K562 (cell line): ENCODE measurements at regions of chr15 and their contacts with region 1.

Region 1: GRCh38 chr15:65792130-65792987 is at the start of gene DENND4A:
- DNase-seq: peak; percentile 87 to 99 (median 93)
- ATAC-seq: peak; percentile 87
- H3K4me3 ChIP-seq: peak within 1 kb of the TSS; percentile 77
- H3K27ac ChIP-seq: peak within 1 kb of the TSS; percentile 99
- H3K4me1 ChIP-seq: peaks cover 21 to 30% of the 10 kb centered on the region in 2 experiments
- H3K27me3 ChIP-seq: no peaks in the 10 kb centered on the region
- CTCF ChIP-seq: no peak
- EP300 ChIP-seq: no peak
- POLR2A ChIP-seq: peak; percentile 91
- RAD21 ChIP-seq: peak; percentile 6 to 13; a peak in 1 of 4 replicates
- polyA plus RNA-seq, gene DENND4A: 6.8 to 6.9 TPM

Region 2: GRCh38 chr15:65738649-65739048 is 53.7 kb before region 1 on chr15:
- CTCF ChIA-PET with region 1: no interaction called
- POLR2A ChIA-PET with region 1: no interaction called
- in situ Hi-C with region 1: no loop called
- intact Hi-C with region 1: no loop called
- DNase-seq: no peak
- ATAC-seq: no peak
- H3K4me3 ChIP-seq: no peak overlapping the region
- H3K27ac ChIP-seq: no peak overlapping the region
- H3K4me1 ChIP-seq: peaks cover 4 to 8% of the 10 kb centered on the region in 2 experiments; a peak in 4 of 5 replicates
- H3K27me3 ChIP-seq: no peaks in the 10 kb centered on the region
- CTCF ChIP-seq: no peak
- EP300 ChIP-seq: no peak
- POLR2A ChIP-seq: no peak
- RAD21 ChIP-seq: no peak

Region 3: GRCh38 chr15:65773386-65774111 is 18.8 kb before region 1 on chr15:
- CTCF ChIA-PET with region 1: interaction called, 3 read pairs
- POLR2A ChIA-PET with region 1: interaction called, 33 read pairs
- in situ Hi-C with region 1: no loop called
- intact Hi-C with region 1: no loop called
- DNase-seq: no peak
- ATAC-seq: no peak
- H3K4me3 ChIP-seq: no peak overlapping the region
- H3K27ac ChIP-seq: no peak overlapping the region
- H3K4me1 ChIP-seq: peaks cover 10 to 12% of the 10 kb centered on the region in 2 experiments; a peak in 4 of 5 replicates
- H3K27me3 ChIP-seq: no peaks in the 10 kb centered on the region
- CTCF ChIP-seq: no peak
- EP300 ChIP-seq: no peak
- POLR2A ChIP-seq: no peak
- RAD21 ChIP-seq: no peak

Region 4: GRCh38 chr15:65782096-65782495 is 10.3 kb before region 1 on chr15:
- CTCF ChIA-PET with region 1: interaction called, 3 read pairs
- POLR2A ChIA-PET with region 1: interaction called, 33 read pairs
- in situ Hi-C with region 1: no loop called
- intact Hi-C with region 1: no loop called
- DNase-seq: no peak
- ATAC-seq: peak; percentile 46
- H3K4me3 ChIP-seq: no peak overlapping the region
- H3K27ac ChIP-seq: no peak overlapping the region; the same call in 1 of the 3 replicates
- H3K4me1 ChIP-seq: peaks cover 13 to 38% of the 10 kb centered on the region in 2 experiments; a peak in 4 of 5 replicates
- H3K27me3 ChIP-seq: no peaks in the 10 kb centered on the region
- CTCF ChIP-seq: no peak
- EP300 ChIP-seq: no peak
- POLR2A ChIP-seq: no peak
- RAD21 ChIP-seq: no peak

Region 5: DNA sequence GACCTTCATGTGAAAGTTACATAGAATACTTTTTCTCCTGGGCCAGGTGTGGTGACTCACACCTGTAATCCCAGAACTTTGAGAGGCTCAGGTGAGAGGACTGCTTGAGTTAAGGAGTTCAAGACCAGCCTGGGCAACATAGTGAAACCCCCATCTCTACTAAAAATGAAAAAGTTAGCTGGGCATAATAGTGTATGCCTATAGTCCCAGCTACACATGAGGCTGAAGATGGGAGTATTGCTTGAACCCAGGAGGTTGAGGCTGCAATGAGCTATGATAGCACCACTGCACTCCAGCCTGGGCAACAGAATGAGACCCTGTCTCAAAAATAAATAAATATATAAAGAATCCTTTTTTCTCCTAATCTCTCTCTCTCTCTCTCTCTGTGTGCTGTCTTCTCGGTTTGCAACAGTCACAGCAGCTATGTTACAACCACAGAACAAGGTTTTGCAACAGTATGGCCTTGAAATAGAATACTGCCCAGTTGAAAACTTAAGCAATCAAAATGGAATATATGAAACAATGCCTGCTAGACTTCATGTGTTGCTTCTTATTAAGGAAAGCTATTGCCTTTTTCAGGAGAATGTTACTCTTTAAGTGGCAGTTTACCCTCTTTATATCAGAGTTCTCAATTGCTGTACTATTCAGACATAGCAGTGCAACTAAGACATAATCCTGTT is 12.0 kb after region 1 on chr15:
- CTCF ChIA-PET with region 1: no interaction called
- POLR2A ChIA-PET with region 1: interaction called, 19 read pairs
- in situ Hi-C with region 1: no loop called
- intact Hi-C with region 1: no loop called
- DNase-seq: no peak
- ATAC-seq: peak; percentile 26
- H3K4me3 ChIP-seq: no peak overlapping the region
- H3K27ac ChIP-seq: peak overlapping the region; percentile 58
- H3K4me1 ChIP-seq: peaks cover 6 to 36% of the 10 kb centered on the region in 2 experiments; a peak in 3 of 5 replicates
- H3K27me3 ChIP-seq: no peaks in the 10 kb centered on the region
- CTCF ChIP-seq: no peak
- EP300 ChIP-seq: no peak
- POLR2A ChIP-seq: no peak
- RAD21 ChIP-seq: no peak

Region 6: GRCh38 chr15:65824031-65824743 is 31.8 kb after region 1 on chr15:
- CTCF ChIA-PET with region 1: no interaction called
- POLR2A ChIA-PET with region 1: interaction called, 7 read pairs
- in situ Hi-C with region 1: no loop called
- intact Hi-C with region 1: loop called (anchors 2 kb)
- DNase-seq: peak; percentile 52 to 88 (median 66)
- ATAC-seq: peak; percentile 95
- H3K4me3 ChIP-seq: no peak overlapping the region
- H3K27ac ChIP-seq: peak overlapping the region; percentile 27; the same call in 1 of the 3 replicates
- H3K4me1 ChIP-seq: peaks cover 17 to 33% of the 10 kb centered on the region in 2 experiments
- H3K27me3 ChIP-seq: no peaks in the 10 kb centered on the region
- CTCF ChIP-seq: peak; percentile 73 to 85 (median 83)
- EP300 ChIP-seq: 0 out of 2 replicates have a peak, but pooled peaks have one; percentile 34
- POLR2A ChIP-seq: no peak
- RAD21 ChIP-seq: peak; percentile 69 to 82

Region 7: DNA sequence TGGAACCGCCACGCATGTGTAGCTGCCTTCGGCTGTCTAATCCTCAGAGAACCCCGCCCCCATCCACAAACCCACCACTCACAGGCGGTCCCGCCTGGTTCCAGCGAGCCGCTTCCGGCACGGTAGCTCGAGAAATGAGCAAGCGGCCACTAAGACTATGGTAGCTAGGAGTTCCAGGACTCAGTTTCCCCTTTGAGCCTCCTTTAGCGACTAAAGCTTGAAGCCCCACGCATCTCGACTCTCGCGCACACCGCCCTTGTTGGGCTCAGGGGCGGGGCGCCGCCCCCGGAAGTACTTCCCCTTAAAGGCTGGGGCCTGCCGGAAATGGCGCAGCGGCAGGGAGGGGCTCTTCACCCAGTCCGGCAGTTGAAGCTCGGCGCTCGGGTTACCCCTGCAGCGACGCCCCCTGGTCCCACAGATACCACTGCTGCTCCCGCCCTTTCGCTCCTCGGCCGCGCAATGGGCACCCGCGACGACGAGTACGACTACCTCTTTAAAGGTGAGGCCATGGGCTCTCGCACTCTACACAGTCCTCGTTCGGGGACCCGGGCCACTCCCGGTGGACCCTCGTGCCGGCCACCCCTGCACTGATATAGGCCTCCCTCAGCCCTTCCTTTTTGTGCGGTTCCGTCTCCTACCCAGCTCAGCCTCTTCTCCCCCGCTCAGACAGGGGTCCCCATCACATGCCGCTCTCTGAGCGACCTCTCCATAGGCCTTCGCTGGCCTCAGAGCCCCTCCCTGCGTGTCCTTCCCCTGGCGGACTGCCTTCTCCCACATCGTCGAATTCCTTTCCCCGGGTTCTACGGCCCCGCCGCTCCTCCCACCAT is 77.0 kb after region 1 on chr15 and contains the start of gene RAB11A:
- CTCF ChIA-PET with region 1: no interaction called
- POLR2A ChIA-PET with region 1: interaction called, 10 read pairs
- in situ Hi-C with region 1: no loop called
- intact Hi-C with region 1: loop called (anchors 5 kb)
- DNase-seq: peak; percentile 94 to 98 (median 96)
- ATAC-seq: peak; percentile 94
- H3K4me3 ChIP-seq: peak within 1 kb of the TSS; percentile 87
- H3K27ac ChIP-seq: peak within 1 kb of the TSS; percentile 96
- H3K4me1 ChIP-seq: peaks cover 11 to 12% of the 10 kb centered on the region in 2 experiments; a peak in 3 of 5 replicates
- H3K27me3 ChIP-seq: no peaks in the 10 kb centered on the region
- CTCF ChIP-seq: peak; percentile 49 to 58 (median 53); a peak in 4 of 6 replicates
- EP300 ChIP-seq: 0 out of 2 replicates have a peak, but pooled peaks have one; percentile 18
- POLR2A ChIP-seq: peak; percentile 99
- RAD21 ChIP-seq: peak in 1 of 2 experiments; percentile 39; a peak in 2 of 4 replicates
- polyA plus RNA-seq, gene RAB11A: 236 to 271 TPM